ENCODE measurements at regions of chr7 and their contacts with region 1.

Region 1: DNA sequence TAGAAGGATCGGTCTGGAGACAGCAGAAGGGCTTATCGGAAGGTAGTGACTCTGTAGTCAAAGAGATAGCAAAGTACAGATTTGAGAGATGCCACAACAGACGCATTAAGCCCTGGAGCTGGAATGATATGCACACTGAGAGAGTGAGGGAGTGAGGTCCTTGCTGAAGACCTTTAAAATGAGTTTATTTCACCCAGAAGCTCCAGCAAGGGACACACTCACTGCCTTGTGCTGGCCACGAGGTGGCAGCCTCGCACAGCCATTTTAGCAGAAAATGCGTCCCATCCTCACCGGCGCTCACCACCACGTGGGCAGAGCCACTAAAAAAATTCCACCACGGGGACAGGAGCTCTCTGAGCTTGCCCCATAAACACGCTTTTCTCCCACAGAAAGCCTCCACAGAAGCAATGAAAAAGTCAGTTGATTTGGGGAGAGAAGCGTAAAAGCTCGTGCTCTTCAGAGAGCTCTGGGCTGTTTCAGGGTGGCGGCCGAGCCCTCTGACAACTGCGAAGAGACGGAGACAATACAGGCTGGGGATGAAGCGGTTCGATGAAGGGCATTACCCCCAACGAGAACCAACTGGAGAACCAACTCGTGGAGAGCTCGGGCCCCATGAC is 163.0 kb upstream of the KLF14 start:
- DNase-seq: peak; percentile 75
- H3K4me3 ChIP-seq: no peak overlapping the region
- H3K27ac ChIP-seq: peak overlapping the region; percentile 42
- H3K4me1 ChIP-seq: peaks cover 75% of the 10 kb centered on the region
- H3K27me3 ChIP-seq: no peaks in the 10 kb centered on the region
- CTCF ChIP-seq: peak; percentile 69 to 84
- POLR2A ChIP-seq: peak; percentile 39

Region 2: GRCh38 chr7:130912862-130913631 is 16.0 kb after region 1 on chr7:
- CTCF ChIA-PET with region 1: interaction called, 160 read pairs
- POLR2A ChIA-PET with region 1: interaction called, 6 read pairs
- dilution Hi-C with region 1: no loop called
- intact Hi-C with region 1: no loop called
- DNase-seq: peak; percentile 97
- H3K4me3 ChIP-seq: peak overlapping the region; percentile 51 to 99 (median 88)
- H3K27ac ChIP-seq: peak overlapping the region; percentile 100
- H3K4me1 ChIP-seq: peaks cover 60% of the 10 kb centered on the region
- H3K27me3 ChIP-seq: no peaks in the 10 kb centered on the region
- CTCF ChIP-seq: no peak
- POLR2A ChIP-seq: peak; percentile 48

Region 3: GRCh38 chr7:130941322-130942210 is 44.6 kb after region 1 on chr7:
- CTCF ChIA-PET with region 1: interaction called, 31 read pairs
- POLR2A ChIA-PET with region 1: no interaction called
- dilution Hi-C with region 1: no loop called
- intact Hi-C with region 1: no loop called
- DNase-seq: peak; percentile 55
- H3K4me3 ChIP-seq: peak overlapping the region; percentile 6 to 29 (median 25)
- H3K27ac ChIP-seq: peak overlapping the region; percentile 14
- H3K4me1 ChIP-seq: peaks cover 13% of the 10 kb centered on the region
- H3K27me3 ChIP-seq: no peaks in the 10 kb centered on the region
- CTCF ChIP-seq: no peak
- POLR2A ChIP-seq: no peak

Region 4: DNA sequence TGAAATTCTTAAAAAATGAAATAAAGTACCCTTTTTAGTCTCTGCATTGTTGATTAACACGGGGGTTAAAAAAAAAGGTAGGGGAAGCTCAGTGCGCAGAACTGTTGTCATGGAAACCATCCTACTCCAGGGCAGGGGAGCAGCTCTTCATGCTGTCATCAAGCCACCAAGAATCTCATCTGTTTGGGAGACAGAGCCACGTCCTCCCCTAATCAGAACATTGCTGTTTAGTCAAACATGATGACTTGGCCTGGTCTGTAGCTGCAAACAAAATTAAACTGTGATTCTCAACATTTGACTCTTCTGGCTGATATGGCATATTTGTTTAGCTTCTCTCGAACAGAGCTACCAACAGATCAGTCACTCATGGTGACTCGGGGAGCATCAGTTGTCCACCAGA is 91.4 kb after region 1 on chr7:
- CTCF ChIA-PET with region 1: interaction called, 34 read pairs
- POLR2A ChIA-PET with region 1: no interaction called
- dilution Hi-C with region 1: no loop called
- intact Hi-C with region 1: no loop called
- DNase-seq: no peak
- H3K4me3 ChIP-seq: no peak overlapping the region
- H3K27ac ChIP-seq: no peak overlapping the region
- H3K4me1 ChIP-seq: no peaks in the 10 kb centered on the region
- H3K27me3 ChIP-seq: no peaks in the 10 kb centered on the region
- CTCF ChIP-seq: no peak
- POLR2A ChIP-seq: no peak

Region 5: GRCh38 chr7:131015655-131015954 is 118.6 kb after region 1 on chr7:
- CTCF ChIA-PET with region 1: interaction called, 12 read pairs
- POLR2A ChIA-PET with region 1: interaction called, 4 read pairs
- dilution Hi-C with region 1: no loop called
- intact Hi-C with region 1: no loop called
- DNase-seq: peak; percentile 17
- H3K4me3 ChIP-seq: no peak overlapping the region
- H3K27ac ChIP-seq: no peak overlapping the region
- H3K4me1 ChIP-seq: peaks cover 7% of the 10 kb centered on the region
- H3K27me3 ChIP-seq: no peaks in the 10 kb centered on the region
- CTCF ChIP-seq: no peak
- POLR2A ChIP-seq: no peak

Region 6: DNA sequence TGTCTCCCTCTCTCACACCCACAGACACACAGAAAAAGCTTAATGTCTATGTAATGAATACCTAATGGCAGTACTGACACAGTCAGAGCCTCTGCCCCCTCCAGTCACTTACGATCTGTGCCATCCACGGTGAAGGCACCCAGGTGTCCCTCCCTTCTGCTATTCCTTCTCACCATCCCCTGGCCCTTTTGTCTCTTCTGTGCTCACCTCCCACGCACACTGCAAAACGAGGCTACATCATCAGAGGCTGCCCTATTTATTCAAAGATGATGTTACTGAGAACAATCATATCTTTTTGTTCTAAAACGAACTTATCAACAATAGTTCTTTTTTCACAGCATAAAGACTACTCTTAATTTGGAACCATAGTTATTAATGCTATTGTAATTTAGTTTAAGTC is 183.7 kb after region 1 on chr7:
- CTCF ChIA-PET with region 1: no interaction called
- POLR2A ChIA-PET with region 1: no interaction called
- dilution Hi-C with region 1: no loop called
- intact Hi-C with region 1: no loop called
- DNase-seq: no peak
- H3K4me3 ChIP-seq: no peak overlapping the region
- H3K27ac ChIP-seq: no peak overlapping the region
- H3K4me1 ChIP-seq: no peaks in the 10 kb centered on the region
- H3K27me3 ChIP-seq: no peaks in the 10 kb centered on the region
- CTCF ChIP-seq: no peak
- POLR2A ChIP-seq: no peak

Region 7: DNA sequence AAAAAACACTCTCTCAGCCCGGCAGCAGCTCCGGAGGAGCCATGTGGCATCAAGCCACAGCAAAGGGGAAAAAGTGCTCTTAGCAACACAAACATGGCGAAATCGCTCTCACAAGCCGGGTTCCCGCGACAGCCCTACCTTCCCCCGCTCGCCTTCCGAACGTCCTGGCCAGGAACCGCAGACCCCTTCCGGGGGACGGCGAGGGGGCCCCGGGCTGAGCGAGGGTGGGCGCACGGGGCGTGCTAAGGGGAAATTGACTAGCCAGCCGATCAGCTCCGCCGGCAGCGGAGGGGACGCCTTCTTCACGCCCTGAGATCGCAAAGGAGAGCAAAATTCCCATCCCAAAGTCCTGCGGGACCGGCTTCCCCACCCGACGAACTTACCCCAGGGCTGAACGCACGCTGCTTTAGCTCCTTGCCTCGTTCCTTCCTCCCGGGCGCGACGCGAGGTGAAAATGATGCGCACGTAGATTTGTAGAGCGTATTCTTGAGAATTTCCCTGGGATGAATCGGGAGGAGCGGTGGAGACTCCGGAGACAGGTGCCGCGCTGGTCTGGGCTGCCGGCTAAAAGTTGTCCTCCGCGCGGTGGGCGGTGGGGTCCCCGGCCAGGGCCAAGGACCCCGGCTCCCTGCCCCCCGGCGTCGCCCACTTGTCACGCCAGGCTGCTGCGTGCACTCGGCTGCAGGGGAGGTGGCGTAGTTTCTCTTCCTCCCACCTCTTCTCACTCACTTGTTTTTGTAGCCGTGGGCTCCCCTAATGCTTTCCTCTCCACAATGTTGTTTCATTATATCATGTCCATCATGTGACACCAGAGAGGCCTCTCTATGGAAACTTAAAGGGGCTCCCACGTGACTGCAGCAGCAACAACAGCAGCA is 210.6 kb after region 1 on chr7:
- CTCF ChIA-PET with region 1: interaction called, 10 read pairs
- POLR2A ChIA-PET with region 1: no interaction called
- dilution Hi-C with region 1: no loop called
- intact Hi-C with region 1: no loop called
- DNase-seq: peak; percentile 92
- H3K4me3 ChIP-seq: peak overlapping the region; percentile 61 to 79 (median 63)
- H3K27ac ChIP-seq: peak overlapping the region; percentile 98
- H3K4me1 ChIP-seq: peaks cover 41% of the 10 kb centered on the region
- H3K27me3 ChIP-seq: no peaks in the 10 kb centered on the region
- CTCF ChIP-seq: no peak
- POLR2A ChIP-seq: no peak

Measured in endothelial cell of umbilical vein (primary cell).